ENCODE measurements at regions of chr21 and their contacts with region 1.

Region 1: GRCh38 chr21:15051644-15052458 is 12.9 kb downstream of the NRIP1 start:
- DNase-seq: no peak
- ATAC-seq: peak; percentile 54
- H3K4me3 ChIP-seq: no peak overlapping the region
- H3K4me3 Mint-ChIP-seq: peak overlapping the region; percentile 54 to 89 (median 75)
- H3K27ac ChIP-seq: no peak overlapping the region
- H3K27ac Mint-ChIP-seq: peak overlapping the region in 8 of 9 donors; percentile 12 to 78 (median 38)
- H3K4me1 ChIP-seq: peaks cover 0 to 57% of the 10 kb centered on the region in 2 donors
- H3K4me1 Mint-ChIP-seq: peaks cover 59 to 93% (median 82%) of the 10 kb centered on the region in 7 donors
- H3K27me3 ChIP-seq: no peaks in the 10 kb centered on the region
- H3K27me3 Mint-ChIP-seq: no peaks in the 10 kb centered on the region

Region 2: DNA sequence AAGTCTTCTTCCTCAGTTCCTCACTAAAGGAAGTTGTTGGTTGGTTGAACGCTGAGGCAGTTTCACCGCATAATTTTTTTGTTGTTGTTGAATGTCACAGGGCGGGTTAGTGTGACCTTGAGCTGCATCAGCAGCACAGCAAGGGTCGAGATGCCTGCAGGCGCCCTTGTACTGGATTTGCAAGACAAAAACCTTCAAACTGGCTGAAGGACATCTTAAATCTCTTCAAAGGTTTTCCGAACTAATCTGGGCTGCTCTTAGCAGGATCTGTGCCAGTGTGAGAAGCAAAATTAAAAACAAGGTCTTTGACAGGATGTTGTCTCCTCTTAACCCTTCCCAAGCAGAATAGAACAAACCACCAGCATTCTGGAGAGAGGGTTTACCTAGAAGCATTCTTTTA is 46.5 kb before region 1 on chr21:
- CTCF ChIA-PET with region 1: no interaction called
- POLR2A ChIA-PET with region 1: interaction called, 3 read pairs
- intact Hi-C with region 1: loop called in 1 of 2 experiments (anchors 2 kb)
- DNase-seq: peak in 8 of 9 donors; percentile 12 to 62 (median 53)
- ATAC-seq: peak; percentile 81
- H3K4me3 ChIP-seq: peak overlapping the region; percentile 56
- H3K4me3 Mint-ChIP-seq: peak overlapping the region; percentile 64 to 88 (median 80)
- H3K27ac ChIP-seq: peak overlapping the region; percentile 24
- H3K27ac Mint-ChIP-seq: peak overlapping the region; percentile 66 to 93 (median 80)
- H3K4me1 ChIP-seq: peaks cover 0 to 28% of the 10 kb centered on the region in 2 donors
- H3K4me1 Mint-ChIP-seq: peaks cover 36 to 67% (median 60%) of the 10 kb centered on the region in 7 donors
- H3K27me3 ChIP-seq: no peaks in the 10 kb centered on the region
- H3K27me3 Mint-ChIP-seq: no peaks in the 10 kb centered on the region

Region 3: GRCh38 chr21:15022561-15023261 is 29.1 kb before region 1 on chr21:
- CTCF ChIA-PET with region 1: no interaction called
- POLR2A ChIA-PET with region 1: no interaction called
- intact Hi-C with region 1: no loop called
- DNase-seq: no peak
- ATAC-seq: peak; percentile 10
- H3K4me3 ChIP-seq: no peak overlapping the region
- H3K4me3 Mint-ChIP-seq: no peak overlapping the region
- H3K27ac ChIP-seq: no peak overlapping the region
- H3K27ac Mint-ChIP-seq: no peak overlapping the region
- H3K4me1 ChIP-seq: no peaks in the 10 kb centered on the region
- H3K4me1 Mint-ChIP-seq: peaks cover 11 to 69% (median 60%) of the 10 kb centered on the region in 7 donors
- H3K27me3 ChIP-seq: no peaks in the 10 kb centered on the region
- H3K27me3 Mint-ChIP-seq: no peaks in the 10 kb centered on the region

Region 4: GRCh38 chr21:15034126-15034853 is 17.6 kb before region 1 on chr21:
- CTCF ChIA-PET with region 1: no interaction called
- POLR2A ChIA-PET with region 1: interaction called, 4 read pairs
- intact Hi-C with region 1: loop called in 1 of 2 experiments (anchors 2 kb)
- DNase-seq: no peak
- ATAC-seq: no peak
- H3K4me3 ChIP-seq: no peak overlapping the region
- H3K4me3 Mint-ChIP-seq: no peak overlapping the region
- H3K27ac ChIP-seq: no peak overlapping the region
- H3K27ac Mint-ChIP-seq: peak overlapping the region in 1 of 9 donors; percentile 82
- H3K4me1 ChIP-seq: peaks cover 0 to 4% of the 10 kb centered on the region in 2 donors
- H3K4me1 Mint-ChIP-seq: peaks cover 3 to 71% (median 41%) of the 10 kb centered on the region in 7 donors
- H3K27me3 ChIP-seq: no peaks in the 10 kb centered on the region
- H3K27me3 Mint-ChIP-seq: no peaks in the 10 kb centered on the region

Region 5: GRCh38 chr21:15039607-15040299 is 12.1 kb before region 1 on chr21:
- CTCF ChIA-PET with region 1: no interaction called
- POLR2A ChIA-PET with region 1: no interaction called
- intact Hi-C with region 1: loop called in 1 of 2 experiments (anchors 1 kb)
- DNase-seq: no peak
- ATAC-seq: no peak
- H3K4me3 ChIP-seq: no peak overlapping the region
- H3K4me3 Mint-ChIP-seq: no peak overlapping the region
- H3K27ac ChIP-seq: no peak overlapping the region
- H3K27ac Mint-ChIP-seq: no peak overlapping the region
- H3K4me1 ChIP-seq: peaks cover 0 to 3% of the 10 kb centered on the region in 2 donors
- H3K4me1 Mint-ChIP-seq: peaks cover 4 to 61% (median 39%) of the 10 kb centered on the region in 7 donors
- H3K27me3 ChIP-seq: no peaks in the 10 kb centered on the region
- H3K27me3 Mint-ChIP-seq: no peaks in the 10 kb centered on the region

Region 6: DNA sequence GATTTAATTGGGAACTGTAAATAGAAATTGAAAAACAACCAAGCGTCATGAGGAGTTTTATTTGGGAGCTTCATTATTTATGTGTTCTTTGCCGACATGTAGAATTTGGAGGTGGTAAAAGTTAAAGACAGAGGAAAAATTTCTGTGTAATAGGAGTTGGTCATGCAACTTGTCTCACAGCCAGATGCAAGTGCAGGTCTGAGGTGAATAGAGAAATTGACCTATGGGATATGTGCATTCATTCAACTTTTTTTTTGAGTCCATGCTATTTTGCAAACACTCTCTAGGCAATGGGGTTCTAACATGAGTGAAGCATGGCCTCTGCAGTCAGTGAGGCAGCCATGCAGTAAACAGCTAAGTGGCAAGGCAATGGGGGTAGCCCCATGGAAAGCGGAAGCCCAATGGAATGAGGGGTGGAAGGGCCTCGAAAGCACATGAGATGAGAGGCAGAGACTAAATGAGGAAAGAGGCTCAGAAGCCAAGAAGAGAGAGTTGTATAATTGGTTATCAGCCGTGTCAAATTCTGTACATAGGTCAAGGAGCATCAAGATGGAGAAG is 69.3 kb after region 1 on chr21:
- CTCF ChIA-PET with region 1: no interaction called
- POLR2A ChIA-PET with region 1: no interaction called
- intact Hi-C with region 1: no loop called
- DNase-seq: no peak
- ATAC-seq: no peak
- H3K4me3 ChIP-seq: no peak overlapping the region
- H3K4me3 Mint-ChIP-seq: no peak overlapping the region
- H3K27ac ChIP-seq: no peak overlapping the region
- H3K27ac Mint-ChIP-seq: no peak overlapping the region
- H3K4me1 ChIP-seq: no peaks in the 10 kb centered on the region
- H3K4me1 Mint-ChIP-seq: no peaks in the 10 kb centered on the region
- H3K27me3 ChIP-seq: no peaks in the 10 kb centered on the region
- H3K27me3 Mint-ChIP-seq: peaks cover 5 to 14% (median 9%) of the 10 kb centered on the region in 5 donors

Region 7: DNA sequence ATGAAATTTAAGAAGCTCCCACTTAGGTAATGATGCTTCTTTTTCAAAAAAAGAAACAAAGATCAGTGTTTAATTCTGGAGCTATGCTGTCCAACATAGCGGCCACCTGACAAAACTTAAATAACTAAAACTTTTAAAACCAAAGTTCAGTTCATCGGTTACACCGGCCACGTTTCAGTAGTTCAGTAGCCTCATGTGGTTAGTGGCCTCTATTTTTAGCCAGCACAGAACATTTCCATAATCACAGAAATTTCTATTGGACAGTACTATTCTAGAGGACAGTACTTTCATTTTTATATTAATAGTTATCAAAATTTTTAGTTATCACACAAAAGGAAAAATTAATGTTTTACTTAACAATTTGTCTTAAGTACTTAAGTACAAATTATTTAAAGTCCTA is 819.0 kb after region 1 on chr21:
- CTCF ChIA-PET with region 1: no interaction called
- POLR2A ChIA-PET with region 1: no interaction called
- intact Hi-C with region 1: no loop called
- DNase-seq: no peak
- ATAC-seq: no peak
- H3K4me3 ChIP-seq: no peak overlapping the region
- H3K4me3 Mint-ChIP-seq: no peak overlapping the region
- H3K27ac ChIP-seq: no peak overlapping the region
- H3K27ac Mint-ChIP-seq: no peak overlapping the region
- H3K4me1 ChIP-seq: no peaks in the 10 kb centered on the region
- H3K4me1 Mint-ChIP-seq: peaks cover 0 to 6% (median 0%) of the 10 kb centered on the region in 7 donors
- H3K27me3 ChIP-seq: no peaks in the 10 kb centered on the region
- H3K27me3 Mint-ChIP-seq: no peaks in the 10 kb centered on the region

Measured in naive thymus-derived CD4-positive, alpha-beta T cell (primary cell).